ENCODE measurements at regions of chr7 and their contacts with region 1.

Region 1: GRCh38 chr7:66571568-66571967 is 57.1 kb upstream of the KCTD7 start:
- DNase-seq: no peak
- ATAC-seq: no peak
- H3K4me3 ChIP-seq: no peak overlapping the region
- H3K4me3 Mint-ChIP-seq: no peak overlapping the region
- H3K27ac ChIP-seq: no peak overlapping the region
- H3K27ac Mint-ChIP-seq: no peak overlapping the region
- H3K4me1 ChIP-seq: peaks cover 5% of the 10 kb centered on the region
- H3K4me1 Mint-ChIP-seq: peaks cover 15% of the 10 kb centered on the region
- H3K27me3 ChIP-seq: no peaks in the 10 kb centered on the region
- H3K27me3 Mint-ChIP-seq: no peaks in the 10 kb centered on the region
- CTCF ChIP-seq: no peak

Region 2: GRCh38 chr7:66452165-66452564 is 119.4 kb before region 1 on chr7:
- CTCF ChIA-PET with region 1: no interaction called
- POLR2A ChIA-PET with region 1: no interaction called
- intact Hi-C with region 1: loop called in 1 of 2 experiments (anchors 5 kb)
- DNase-seq: no peak
- ATAC-seq: no peak
- H3K4me3 ChIP-seq: no peak overlapping the region
- H3K4me3 Mint-ChIP-seq: no peak overlapping the region
- H3K27ac ChIP-seq: no peak overlapping the region
- H3K27ac Mint-ChIP-seq: no peak overlapping the region
- H3K4me1 ChIP-seq: no peaks in the 10 kb centered on the region
- H3K4me1 Mint-ChIP-seq: no peaks in the 10 kb centered on the region
- H3K27me3 ChIP-seq: no peaks in the 10 kb centered on the region
- H3K27me3 Mint-ChIP-seq: no peaks in the 10 kb centered on the region
- CTCF ChIP-seq: no peak

Region 3: GRCh38 chr7:66522518-66522917 is 49.0 kb before region 1 on chr7:
- CTCF ChIA-PET with region 1: no interaction called
- POLR2A ChIA-PET with region 1: no interaction called
- intact Hi-C with region 1: no loop called
- DNase-seq: peak in 3 of 14 experiments; percentile 9 to 17 (median 16)
- ATAC-seq: peak; percentile 41
- H3K4me3 ChIP-seq: no peak overlapping the region
- H3K4me3 Mint-ChIP-seq: no peak overlapping the region
- H3K27ac ChIP-seq: no peak overlapping the region
- H3K27ac Mint-ChIP-seq: no peak overlapping the region
- H3K4me1 ChIP-seq: no peaks in the 10 kb centered on the region
- H3K4me1 Mint-ChIP-seq: no peaks in the 10 kb centered on the region
- H3K27me3 ChIP-seq: no peaks in the 10 kb centered on the region
- H3K27me3 Mint-ChIP-seq: no peaks in the 10 kb centered on the region
- CTCF ChIP-seq: no peak

Region 4: GRCh38 chr7:67406976-67407375 is 835.4 kb after region 1 on chr7:
- CTCF ChIA-PET with region 1: no interaction called
- POLR2A ChIA-PET with region 1: no interaction called
- intact Hi-C with region 1: no loop called
- DNase-seq: no peak
- ATAC-seq: no peak
- H3K4me3 ChIP-seq: no peak overlapping the region
- H3K4me3 Mint-ChIP-seq: no peak overlapping the region
- H3K27ac ChIP-seq: no peak overlapping the region
- H3K27ac Mint-ChIP-seq: no peak overlapping the region
- H3K4me1 ChIP-seq: no peaks in the 10 kb centered on the region
- H3K4me1 Mint-ChIP-seq: no peaks in the 10 kb centered on the region
- H3K27me3 ChIP-seq: no peaks in the 10 kb centered on the region
- H3K27me3 Mint-ChIP-seq: peaks cover 5% of the 10 kb centered on the region
- CTCF ChIP-seq: no peak